WTC11 (cell line): ENCODE measurements at regions of chr12 and their contacts with region 1.

Region 1: GRCh38 chr12:2034633-2035430 is 18.0 kb upstream of the CACNA1C start:
- DNase-seq: peak; percentile 88
- ATAC-seq: peak; percentile 93
- H3K4me3 Mint-ChIP-seq: peak overlapping the region; percentile 52
- H3K27ac Mint-ChIP-seq: no peak overlapping the region
- H3K4me1 Mint-ChIP-seq: peaks cover 14% of the 10 kb centered on the region
- H3K27me3 Mint-ChIP-seq: peaks cover 40% of the 10 kb centered on the region
- CTCF ChIP-seq: peak; percentile 86

Region 2: GRCh38 chr12:2009623-2010022 is 25.2 kb before region 1 on chr12:
- CTCF ChIA-PET with region 1: interaction called, 21 read pairs
- POLR2A ChIA-PET with region 1: no interaction called
- DNase-seq: no peak
- ATAC-seq: peak; percentile 68
- H3K4me3 Mint-ChIP-seq: no peak overlapping the region
- H3K27ac Mint-ChIP-seq: peak overlapping the region; percentile 43; the same call in 1 of the 2 replicates
- H3K4me1 Mint-ChIP-seq: peaks cover 59% of the 10 kb centered on the region
- H3K27me3 Mint-ChIP-seq: no peaks in the 10 kb centered on the region
- CTCF ChIP-seq: no peak